ENCODE measurements at regions of chr2 and their contacts with region 1.

Region 1: DNA sequence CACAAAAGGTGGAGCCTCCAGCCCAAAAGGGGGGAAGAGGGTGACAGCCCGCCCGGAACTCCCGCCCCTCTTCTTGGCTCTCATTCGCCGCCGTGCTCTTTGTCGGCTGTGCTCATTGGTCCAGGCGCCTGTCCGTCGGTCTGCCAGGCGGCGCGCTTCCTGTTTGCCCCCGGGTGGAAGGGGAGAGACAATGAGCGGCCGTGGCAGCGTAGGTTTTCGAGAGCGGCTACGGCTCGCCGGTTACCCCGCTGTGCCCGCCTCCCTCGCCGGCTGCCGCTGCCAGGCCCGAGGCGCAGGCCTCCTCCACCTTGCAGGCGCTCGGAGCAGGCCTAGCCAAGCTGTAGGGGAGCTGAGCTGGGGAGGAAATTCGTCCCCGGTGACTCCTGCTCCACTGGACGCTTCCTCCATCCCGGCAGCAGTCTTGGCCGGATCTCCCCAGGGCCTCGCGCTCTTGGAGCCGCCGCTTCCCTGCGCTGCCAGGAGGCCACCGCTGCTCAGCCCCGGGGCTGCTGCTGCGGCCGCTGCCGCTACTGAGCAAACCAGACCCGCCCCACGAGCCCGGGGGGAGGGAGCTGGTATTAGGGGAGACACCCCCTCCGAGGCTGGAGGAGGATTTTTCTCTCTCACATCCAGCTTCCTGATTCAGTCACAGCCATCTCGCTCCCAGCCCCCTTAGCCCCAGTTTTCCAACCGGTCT is at the start of gene SP3:
- DNase-seq: peak; percentile 97 to 99
- H3K4me3 ChIP-seq: peak within 1 kb of the TSS; percentile 100
- H3K27ac ChIP-seq: peak within 1 kb of the TSS; percentile 100
- H3K4me1 ChIP-seq: peaks cover 0 to 42% (median 9%) of the 10 kb centered on the region in 4 donors
- H3K27me3 ChIP-seq: no peaks in the 10 kb centered on the region
- CTCF ChIP-seq: peak in 1 of 2 experiments; percentile 18

Region 2: DNA sequence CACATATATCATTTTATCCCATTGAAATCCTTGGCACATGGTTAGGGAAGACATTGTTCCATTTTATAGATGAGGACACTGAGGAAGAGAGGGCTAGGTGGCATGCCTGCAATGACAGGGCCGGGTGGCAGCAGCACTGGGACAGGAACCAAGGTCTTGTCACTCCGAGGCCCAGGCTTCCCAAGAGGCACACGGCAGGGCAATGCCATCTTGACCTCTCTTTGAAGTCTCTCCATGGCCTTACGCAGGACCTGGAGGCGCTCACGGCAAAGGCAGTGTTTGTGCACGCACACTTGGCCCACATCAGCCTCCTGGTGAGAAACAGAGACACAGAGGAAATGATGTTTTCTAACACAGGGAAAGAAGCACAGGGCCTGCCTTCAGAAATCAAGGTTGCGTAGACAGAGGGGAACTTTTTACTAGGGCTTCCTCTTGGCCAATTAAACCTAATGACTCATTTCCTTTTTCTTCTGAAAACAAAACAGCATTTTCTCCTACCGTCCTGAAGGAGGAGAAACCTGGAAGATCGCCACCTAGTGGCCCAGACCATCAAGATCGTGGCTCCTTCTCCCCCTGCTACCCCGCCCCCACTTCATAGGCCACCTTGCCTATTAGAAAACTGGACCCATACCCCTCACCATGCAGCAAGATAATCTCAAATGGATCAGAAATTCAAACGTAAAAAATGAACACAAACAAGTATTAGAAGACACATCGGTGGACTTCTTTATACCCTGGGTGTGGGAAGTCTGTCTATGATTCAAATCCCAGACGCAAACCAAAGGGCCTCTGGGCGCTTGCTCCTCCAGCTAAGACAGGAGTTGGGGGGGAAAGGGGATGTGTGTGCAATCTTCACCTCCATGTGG is 74.3 kb after region 1 on chr2:
- intact Hi-C with region 1: loop called (anchors 5 kb)
- DNase-seq: peak; percentile 87 to 92
- H3K4me3 ChIP-seq: peak overlapping the region in 1 of 2 donors; percentile 3
- H3K27ac ChIP-seq: peak overlapping the region; percentile 74 to 77
- H3K4me1 ChIP-seq: peaks cover 7 to 41% (median 18%) of the 10 kb centered on the region in 4 donors
- H3K27me3 ChIP-seq: no peaks in the 10 kb centered on the region
- CTCF ChIP-seq: peak; percentile 84 to 86

Region 3: DNA sequence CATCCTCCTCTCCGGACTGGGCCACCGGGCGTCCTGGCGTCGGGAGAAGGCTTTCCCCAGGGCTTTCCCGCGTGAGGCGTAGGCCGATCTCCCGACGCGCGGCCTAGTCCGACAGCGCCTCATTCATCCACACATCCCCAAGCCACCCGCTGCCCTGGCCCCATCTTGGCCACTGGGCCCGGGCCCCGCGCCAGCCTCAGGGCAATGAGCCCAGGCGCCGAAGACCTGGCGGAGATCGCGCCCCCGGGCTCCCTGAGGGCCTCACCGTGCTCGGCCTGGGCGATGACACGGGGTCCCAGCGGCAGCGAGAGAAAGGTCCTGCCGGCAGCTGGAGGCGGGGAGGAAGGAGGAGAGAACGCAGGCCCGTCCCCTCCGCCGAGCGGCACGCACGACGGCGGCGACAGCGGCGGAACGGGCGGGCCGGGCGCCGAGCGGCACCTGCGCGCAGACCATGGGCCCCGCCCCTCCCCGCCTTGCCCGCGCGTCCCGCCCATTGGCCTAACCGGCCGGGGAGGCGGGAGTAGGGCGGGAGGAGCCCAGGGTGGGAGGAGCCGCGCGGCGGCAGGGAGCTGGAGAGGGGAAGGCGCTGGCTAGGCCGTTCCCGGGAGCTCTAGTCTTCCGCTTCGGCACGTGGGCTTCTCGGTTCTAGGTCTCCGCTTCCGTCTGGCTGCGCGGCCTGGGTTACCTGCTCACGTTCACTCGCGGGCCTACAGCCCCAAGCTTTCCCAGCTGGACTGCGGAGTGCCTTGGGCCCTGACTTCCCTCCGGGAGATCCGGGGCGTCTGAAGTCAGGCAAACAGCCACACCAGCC is 282.9 kb after region 1 on chr2 and contains the start of gene OLA1:
- intact Hi-C with region 1: loop called (anchors 10 kb)
- DNase-seq: peak; percentile 91 to 97
- H3K4me3 ChIP-seq: peak within 1 kb of the TSS; percentile 62 to 74
- H3K27ac ChIP-seq: peak within 1 kb of the TSS; percentile 76 to 87
- H3K4me1 ChIP-seq: peaks cover 0 to 18% (median 6%) of the 10 kb centered on the region in 4 donors
- H3K27me3 ChIP-seq: no peaks in the 10 kb centered on the region
- CTCF ChIP-seq: peak in 1 of 2 experiments; percentile 9